ENCODE measurements at regions of chr7 and their contacts with region 1.

Region 1: GRCh38 chr7:6516387-6516983 is 34.8 kb downstream of the GRID2IP start:
- DNase-seq: no peak
- CTCF ChIP-seq: peak; percentile 89

Region 2: DNA sequence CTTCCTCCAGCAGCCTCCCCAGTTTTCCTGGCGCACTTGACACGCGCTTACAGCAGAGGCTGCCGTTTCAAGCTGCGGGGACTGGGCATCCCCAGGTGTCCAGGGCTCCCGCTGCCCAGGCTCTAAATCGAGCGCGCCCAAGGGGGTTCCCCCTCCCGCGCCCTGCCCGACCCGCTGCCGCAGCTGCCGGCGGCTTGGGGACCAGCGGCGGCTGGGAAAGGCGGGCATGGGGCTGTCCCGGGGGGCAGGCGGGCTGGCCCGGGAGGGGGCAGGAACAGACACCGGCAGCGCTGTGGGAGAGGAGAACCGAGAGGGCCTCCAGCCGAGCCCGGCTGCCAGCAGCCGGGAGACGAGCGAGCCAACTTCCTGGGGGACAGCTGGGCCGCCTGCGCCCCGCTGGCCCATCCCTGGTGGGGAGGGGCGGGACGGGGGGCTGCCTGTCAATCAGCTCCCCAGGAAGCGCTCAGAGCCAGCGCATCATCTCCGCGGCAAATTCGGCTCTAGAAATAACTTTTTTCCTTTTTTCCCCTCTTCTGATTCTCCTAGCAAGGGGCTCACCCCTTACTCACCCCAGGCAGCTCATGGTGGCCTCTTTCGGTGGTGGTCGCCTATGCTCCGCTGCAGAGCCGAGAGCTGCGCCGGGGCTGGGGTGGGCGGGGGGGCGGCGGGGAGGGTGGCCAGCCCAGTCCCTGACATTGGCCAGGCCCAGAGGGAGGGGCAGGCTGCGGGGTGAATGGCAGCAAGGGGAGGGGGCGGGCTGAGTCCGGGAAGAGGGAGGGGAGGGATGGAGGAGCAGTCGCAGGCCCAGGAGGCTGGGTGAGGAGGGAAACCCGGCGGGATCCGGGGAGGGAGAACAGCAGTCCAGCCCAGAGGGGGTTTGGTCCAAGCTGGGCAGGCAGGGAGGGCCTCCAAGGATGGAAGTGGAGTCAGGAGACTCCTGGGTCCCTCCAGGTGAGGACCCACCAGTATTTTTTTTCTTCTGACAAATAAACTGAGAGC is 20.1 kb after region 1 on chr7:
- CTCF ChIA-PET with region 1: interaction called, 10 read pairs
- POLR2A ChIA-PET with region 1: no interaction called
- DNase-seq: peak; percentile 56
- CTCF ChIP-seq: no peak

Region 3: GRCh38 chr7:6571160-6571779 is 54.8 kb after region 1 on chr7:
- CTCF ChIA-PET with region 1: interaction called, 19 read pairs
- POLR2A ChIA-PET with region 1: no interaction called
- DNase-seq: no peak
- CTCF ChIP-seq: no peak

Region 4: GRCh38 chr7:6886198-6886597 is 369.7 kb after region 1 on chr7:
- CTCF ChIA-PET with region 1: no interaction called
- POLR2A ChIA-PET with region 1: no interaction called
- DNase-seq: no peak
- CTCF ChIP-seq: no peak